ENCODE measurements at regions of chr7 and their contacts with region 1.

Region 1: DNA sequence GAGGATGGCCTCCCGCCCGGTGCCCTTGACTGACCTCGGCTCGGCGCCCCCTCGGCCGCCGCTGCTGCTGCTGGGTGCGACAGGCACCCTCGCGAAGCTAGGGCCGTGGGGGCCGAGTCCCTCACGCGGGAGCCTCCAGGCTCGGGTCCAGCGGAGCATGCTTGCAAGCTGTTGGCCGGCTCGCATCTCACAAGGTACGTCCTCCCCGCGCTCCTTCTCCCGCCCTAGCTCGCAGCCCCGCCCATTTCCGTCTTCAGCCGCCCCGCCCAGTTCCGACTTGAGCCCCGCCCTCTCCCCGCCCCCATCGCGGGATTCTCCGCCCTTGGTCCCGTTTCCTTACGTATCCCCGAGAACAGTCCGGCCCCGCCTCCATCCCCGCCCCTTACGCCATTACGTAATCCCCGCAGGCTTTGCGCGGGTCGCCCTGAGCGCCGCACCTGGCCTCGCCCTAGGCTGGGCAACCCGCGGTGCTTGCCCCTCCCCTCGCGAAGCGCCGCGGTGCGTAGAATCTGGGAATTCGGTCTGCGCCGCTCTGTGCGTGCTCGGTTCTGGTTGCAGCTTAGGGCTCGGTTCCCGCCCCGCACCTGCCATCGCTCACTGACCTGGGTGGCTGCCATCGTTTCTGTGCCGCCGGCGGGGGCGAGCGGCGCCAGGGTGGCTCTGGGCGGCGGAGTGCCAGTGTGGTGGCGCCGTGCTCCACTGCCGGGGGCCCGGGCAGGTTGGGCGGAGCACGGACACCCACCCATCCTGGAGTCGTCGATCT is at the start of gene ABHD11:
- DNase-seq: peak; percentile 97
- H3K4me3 Mint-ChIP-seq: peak within 1 kb of the TSS; percentile 93
- H3K27ac Mint-ChIP-seq: peak within 1 kb of the TSS; percentile 92
- H3K4me1 Mint-ChIP-seq: peaks cover 10% of the 10 kb centered on the region
- H3K27me3 Mint-ChIP-seq: peaks cover 3% of the 10 kb centered on the region
- total RNA-seq, gene ABHD11: 17.3 and 18.2 TPM in 2 replicates

Region 2: GRCh38 chr7:73578342-73579127 is 160.3 kb before region 1 on chr7 and contains the start of gene TBL2:
- intact Hi-C with region 1: loop called (anchors 1 kb)
- DNase-seq: peak; percentile 97
- H3K4me3 Mint-ChIP-seq: peak within 1 kb of the TSS; percentile 92
- H3K27ac Mint-ChIP-seq: peak within 1 kb of the TSS; percentile 97
- H3K4me1 Mint-ChIP-seq: peaks cover 15% of the 10 kb centered on the region
- H3K27me3 Mint-ChIP-seq: no peaks in the 10 kb centered on the region
- total RNA-seq, gene TBL2: 43.3 and 43.9 TPM in 2 replicates

Region 3: DNA sequence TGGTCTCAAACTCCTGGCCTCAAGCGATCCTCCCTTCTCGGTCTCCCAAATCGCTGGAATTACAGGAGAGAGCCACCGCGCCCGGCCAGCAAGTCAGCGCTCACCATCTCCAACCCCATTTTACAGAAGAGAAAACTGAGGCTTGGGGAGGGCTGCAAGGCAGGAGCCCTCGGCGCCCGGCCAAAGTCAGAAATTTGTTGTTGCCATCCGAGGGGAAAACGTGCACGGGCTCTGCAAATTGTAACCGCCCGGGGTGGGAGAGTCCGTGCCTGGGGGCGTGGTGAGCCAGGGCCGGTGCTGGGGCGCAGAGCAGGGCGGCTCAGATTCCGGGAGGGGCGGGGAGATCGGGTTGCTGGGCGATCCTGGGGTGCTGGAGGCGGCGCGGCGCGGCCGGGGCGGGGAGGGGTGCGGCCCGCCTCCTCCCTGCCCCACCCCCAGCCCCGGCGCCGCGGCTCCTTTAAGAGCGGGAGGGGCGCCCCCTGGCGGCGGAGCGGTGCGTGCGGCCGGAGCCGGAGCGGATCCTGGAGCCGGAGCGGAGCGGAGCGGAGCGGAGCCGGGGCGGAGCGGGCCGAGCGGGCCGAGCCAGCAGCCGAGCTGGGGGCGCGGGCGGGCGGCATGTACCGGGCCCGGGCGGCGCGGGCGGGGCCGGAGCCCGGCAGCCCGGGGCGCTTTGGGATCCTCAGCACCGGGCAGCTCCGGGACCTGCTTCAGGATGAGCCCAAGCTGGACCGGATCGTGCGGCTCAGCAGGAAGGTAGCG is 71.3 kb before region 1 on chr7 and contains the start of gene VPS37D:
- intact Hi-C with region 1: loop called (anchors 1 kb)
- DNase-seq: peak; percentile 91
- H3K4me3 Mint-ChIP-seq: peak within 1 kb of the TSS; percentile 76
- H3K27ac Mint-ChIP-seq: no peak within 1 kb of the TSS
- H3K4me1 Mint-ChIP-seq: peaks cover 6% of the 10 kb centered on the region
- H3K27me3 Mint-ChIP-seq: peaks cover 33% of the 10 kb centered on the region
- total RNA-seq, gene VPS37D: 0.30 and 0.34 TPM in 2 replicates

Region 4: GRCh38 chr7:73842247-73842895 is 103.6 kb after region 1 on chr7 and contains the start of gene METTL27:
- intact Hi-C with region 1: loop called (anchors 1 kb)
- DNase-seq: peak; percentile 88
- H3K4me3 Mint-ChIP-seq: peak within 1 kb of the TSS; percentile 80
- H3K27ac Mint-ChIP-seq: peak within 1 kb of the TSS; percentile 63
- H3K4me1 Mint-ChIP-seq: peaks cover 10% of the 10 kb centered on the region
- H3K27me3 Mint-ChIP-seq: peaks cover 7% of the 10 kb centered on the region
- total RNA-seq, gene METTL27: 0.90 and 0.94 TPM in 2 replicates